ENCODE measurements at regions of chr15 and their contacts with region 1.

Region 1: GRCh38 chr15:73318463-73319351 is 50.1 kb downstream of the HCN4 start:
- DNase-seq: peak; percentile 74
- H3K4me3 ChIP-seq: no peak overlapping the region
- H3K27ac ChIP-seq: no peak overlapping the region
- H3K4me1 ChIP-seq: no peaks in the 10 kb centered on the region
- H3K27me3 ChIP-seq: no peaks in the 10 kb centered on the region
- CTCF ChIP-seq: no peak

Region 2: DNA sequence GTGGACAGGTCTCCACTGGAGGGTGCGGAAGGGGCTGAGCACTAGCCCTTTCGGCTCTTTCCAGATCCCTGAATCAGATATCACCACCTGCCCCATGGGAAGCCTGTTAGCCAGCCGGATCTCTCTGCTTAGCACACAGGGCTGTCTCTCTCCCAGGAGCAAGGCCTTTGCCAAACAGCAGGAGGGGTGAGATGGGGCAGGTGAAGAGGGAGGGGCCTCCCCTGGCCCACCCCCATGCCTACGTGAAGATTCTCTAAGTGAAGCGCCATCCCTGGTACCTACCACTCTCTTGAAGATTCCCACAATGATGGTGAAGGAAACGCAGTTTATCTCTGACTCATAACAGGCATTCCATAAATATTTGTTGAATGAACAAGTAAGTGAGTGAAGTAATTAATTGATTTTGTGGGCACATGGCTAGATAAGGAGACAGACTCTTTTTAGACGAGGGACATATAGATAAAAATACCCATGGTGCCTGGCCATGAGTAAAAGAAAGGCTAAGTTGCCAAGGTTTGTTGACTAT is 69.6 kb after region 1 on chr15:
- CTCF ChIA-PET with region 1: no interaction called
- POLR2A ChIA-PET with region 1: interaction called, 13 read pairs
- intact Hi-C with region 1: no loop called
- DNase-seq: peak; percentile 45
- H3K4me3 ChIP-seq: no peak overlapping the region
- H3K27ac ChIP-seq: no peak overlapping the region
- H3K4me1 ChIP-seq: no peaks in the 10 kb centered on the region
- H3K27me3 ChIP-seq: peaks cover 24% of the 10 kb centered on the region
- CTCF ChIP-seq: no peak

Measured in A673 (cell line).